Heart left ventricle (tissue), 16 donors: ENCODE measurements at regions of chr12 and their contacts with region 1.

Region 1: GRCh38 chr12:85866986-85867776 is 6.9 kb upstream of the NTS start:
- DNase-seq: peak in 1 of 5 donors; percentile 25
- ATAC-seq: peak; percentile 70 to 85 (median 78)
- H3K4me3 ChIP-seq: peak overlapping the region in 6 of 12 donors; percentile 11 to 41 (median 20)
- H3K27ac ChIP-seq: no peak overlapping the region
- H3K4me1 ChIP-seq: peaks cover 0 to 7% (median 0%) of the 10 kb centered on the region in 12 donors
- H3K27me3 ChIP-seq: no peaks in the 10 kb centered on the region
- CTCF ChIP-seq: peak; percentile 69 to 88 (median 78)
- POLR2A ChIP-seq: no peak

Region 2: DNA sequence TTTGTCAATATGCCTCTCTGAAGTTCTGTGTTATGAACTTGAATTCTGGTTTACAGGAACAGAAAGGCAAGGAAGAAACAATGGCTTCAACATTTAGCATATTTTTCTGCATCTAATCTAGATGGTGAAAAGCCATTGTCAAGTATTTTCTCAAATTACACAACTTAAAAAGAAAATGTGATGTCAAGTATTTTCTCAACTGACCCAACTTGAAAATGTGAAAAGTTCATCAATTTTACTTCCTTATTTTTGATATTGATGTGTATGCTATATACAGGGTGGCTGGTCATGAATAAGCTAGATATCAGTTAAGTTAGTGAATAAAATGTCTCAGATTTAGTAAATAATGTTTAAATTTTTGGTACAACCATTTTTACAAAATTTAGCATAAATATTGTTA is 390.4 kb before region 1 on chr12:
- intact Hi-C with region 1: loop called in 6 of 10 experiments (anchors 5 kb)
- DNase-seq: no peak
- ATAC-seq: no peak
- H3K4me3 ChIP-seq: no peak overlapping the region
- H3K27ac ChIP-seq: no peak overlapping the region
- H3K4me1 ChIP-seq: no peaks in the 10 kb centered on the region
- H3K27me3 ChIP-seq: no peaks in the 10 kb centered on the region
- CTCF ChIP-seq: no peak
- POLR2A ChIP-seq: no peak

Region 3: GRCh38 chr12:85711735-85712390 is 155.3 kb before region 1 on chr12:
- intact Hi-C with region 1: loop called in 1 of 10 experiments (anchors 10 kb)
- DNase-seq: peak in 3 of 5 donors; percentile 19 to 55 (median 38)
- ATAC-seq: peak; percentile 55 to 94 (median 79)
- H3K4me3 ChIP-seq: no peak overlapping the region
- H3K27ac ChIP-seq: peak overlapping the region in 6 of 12 donors; percentile 10 to 45 (median 40)
- H3K4me1 ChIP-seq: peaks cover 0 to 30% (median 13%) of the 10 kb centered on the region in 12 donors
- H3K27me3 ChIP-seq: no peaks in the 10 kb centered on the region
- CTCF ChIP-seq: no peak
- POLR2A ChIP-seq: no peak

Region 4: GRCh38 chr12:85733221-85733840 is 133.8 kb before region 1 on chr12:
- intact Hi-C with region 1: loop called in 4 of 10 experiments (anchors 5 to 10 kb)
- DNase-seq: no peak
- ATAC-seq: no peak
- H3K4me3 ChIP-seq: no peak overlapping the region
- H3K27ac ChIP-seq: no peak overlapping the region
- H3K4me1 ChIP-seq: no peaks in the 10 kb centered on the region
- H3K27me3 ChIP-seq: no peaks in the 10 kb centered on the region
- CTCF ChIP-seq: no peak
- POLR2A ChIP-seq: no peak

Region 5: DNA sequence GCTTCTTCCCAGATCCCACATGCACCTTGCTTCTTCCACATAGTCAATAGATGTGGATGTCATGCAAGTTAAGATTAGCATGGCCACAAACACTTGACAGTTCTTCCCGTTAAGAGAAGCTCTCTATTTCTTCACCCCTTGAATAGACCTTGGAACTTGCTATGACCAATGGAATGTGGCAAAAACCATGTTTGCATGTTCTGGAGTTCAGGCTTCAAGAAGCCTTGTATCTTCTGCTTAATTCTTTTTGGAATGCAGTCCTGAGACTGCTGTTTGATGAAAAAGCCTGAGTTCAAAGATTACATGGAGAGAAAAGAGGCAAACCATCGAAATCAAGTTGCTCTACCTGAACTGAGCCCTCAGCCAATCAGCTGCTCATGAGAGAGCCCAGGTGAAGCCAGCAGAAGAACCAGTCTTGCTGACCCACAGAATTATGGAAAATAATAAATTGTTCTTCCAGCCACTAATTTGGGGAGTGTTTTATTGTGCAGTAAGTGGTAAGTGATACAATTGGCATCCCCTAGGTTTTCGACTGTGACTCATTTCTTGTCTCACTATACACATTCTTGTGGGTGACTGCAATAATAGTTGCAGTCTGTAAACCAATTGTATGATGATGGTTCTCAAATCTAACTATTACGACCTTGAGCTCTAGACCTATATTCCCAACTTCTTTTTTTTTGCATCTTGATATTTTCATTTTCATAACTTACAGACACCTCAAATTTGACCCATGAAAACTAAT is 43.6 kb before region 1 on chr12:
- intact Hi-C with region 1: no loop called
- DNase-seq: no peak
- ATAC-seq: peak in 1 of 4 donors; percentile 50
- H3K4me3 ChIP-seq: no peak overlapping the region
- H3K27ac ChIP-seq: no peak overlapping the region
- H3K4me1 ChIP-seq: peaks cover 0 to 3% (median 0%) of the 10 kb centered on the region in 12 donors
- H3K27me3 ChIP-seq: no peaks in the 10 kb centered on the region
- CTCF ChIP-seq: no peak
- POLR2A ChIP-seq: no peak